ENCODE measurements at regions of chr15 and their contacts with region 1.

Region 1: DNA sequence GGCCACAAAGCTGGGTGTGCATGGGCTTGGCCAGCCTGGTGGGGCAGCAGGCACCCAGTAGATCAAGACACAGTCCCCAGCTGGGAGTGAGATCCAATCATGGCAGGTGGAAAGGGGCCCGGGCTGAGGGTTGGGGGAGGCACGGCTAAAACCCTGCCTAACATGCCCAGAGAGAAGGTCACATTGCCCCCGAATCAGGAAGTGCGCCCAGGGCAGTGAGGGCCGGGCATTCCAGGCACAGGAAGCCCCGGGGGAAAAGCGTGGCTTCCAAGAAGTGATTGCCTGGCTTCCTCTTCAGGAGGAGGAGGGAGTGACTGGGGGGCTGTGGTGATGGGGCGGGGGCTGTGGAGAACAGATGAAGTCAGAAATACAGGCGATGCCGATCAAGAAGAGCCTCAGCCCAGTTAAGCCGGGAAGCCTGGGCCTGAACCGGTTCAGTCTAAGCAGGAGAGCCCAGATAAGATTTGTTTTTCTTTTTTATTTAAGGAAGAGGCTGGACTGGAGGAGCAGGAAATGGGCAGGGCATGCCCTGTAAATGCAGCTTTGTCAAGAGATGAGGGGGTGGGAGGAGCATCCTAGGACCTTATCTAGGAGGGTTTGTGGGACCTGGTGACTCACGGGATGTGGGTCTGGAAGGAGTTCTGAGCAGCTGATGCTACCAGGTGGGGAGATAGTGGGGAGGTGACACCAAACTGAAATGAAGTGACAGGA is 83.9 kb downstream of the CHSY1 start:
- DNase-seq: peak; percentile 90
- H3K4me3 Mint-ChIP-seq: peak overlapping the region; percentile 68
- H3K27ac Mint-ChIP-seq: peak overlapping the region; percentile 94
- H3K4me1 Mint-ChIP-seq: peaks cover 49% of the 10 kb centered on the region
- H3K27me3 Mint-ChIP-seq: no peaks in the 10 kb centered on the region

Region 2: DNA sequence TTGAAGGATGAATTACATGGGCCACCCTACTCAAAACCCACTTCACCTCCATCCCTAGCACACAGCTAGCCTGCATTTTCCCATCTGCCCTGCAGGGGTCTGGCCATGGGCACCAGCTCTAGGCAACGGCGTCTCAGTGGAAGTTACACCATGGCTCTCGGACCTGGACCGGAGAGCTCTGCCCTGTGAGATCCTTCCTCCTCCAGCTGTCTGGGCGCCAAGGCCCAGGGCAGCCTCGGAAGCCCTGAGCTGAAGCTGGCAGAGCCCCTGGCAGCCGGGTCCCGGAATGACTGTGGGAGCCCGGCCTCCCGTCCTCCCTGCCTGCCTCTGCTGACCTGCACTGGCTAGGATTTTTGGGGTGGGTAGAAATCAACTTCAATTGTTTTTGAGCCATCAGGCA is 15.0 kb before region 1 on chr15:
- CTCF ChIA-PET with region 1: interaction called, 11 read pairs
- POLR2A ChIA-PET with region 1: interaction called, 5 read pairs
- DNase-seq: no peak
- H3K4me3 Mint-ChIP-seq: no peak overlapping the region
- H3K27ac Mint-ChIP-seq: no peak overlapping the region
- H3K4me1 Mint-ChIP-seq: peaks cover 34% of the 10 kb centered on the region
- H3K27me3 Mint-ChIP-seq: no peaks in the 10 kb centered on the region

Region 3: DNA sequence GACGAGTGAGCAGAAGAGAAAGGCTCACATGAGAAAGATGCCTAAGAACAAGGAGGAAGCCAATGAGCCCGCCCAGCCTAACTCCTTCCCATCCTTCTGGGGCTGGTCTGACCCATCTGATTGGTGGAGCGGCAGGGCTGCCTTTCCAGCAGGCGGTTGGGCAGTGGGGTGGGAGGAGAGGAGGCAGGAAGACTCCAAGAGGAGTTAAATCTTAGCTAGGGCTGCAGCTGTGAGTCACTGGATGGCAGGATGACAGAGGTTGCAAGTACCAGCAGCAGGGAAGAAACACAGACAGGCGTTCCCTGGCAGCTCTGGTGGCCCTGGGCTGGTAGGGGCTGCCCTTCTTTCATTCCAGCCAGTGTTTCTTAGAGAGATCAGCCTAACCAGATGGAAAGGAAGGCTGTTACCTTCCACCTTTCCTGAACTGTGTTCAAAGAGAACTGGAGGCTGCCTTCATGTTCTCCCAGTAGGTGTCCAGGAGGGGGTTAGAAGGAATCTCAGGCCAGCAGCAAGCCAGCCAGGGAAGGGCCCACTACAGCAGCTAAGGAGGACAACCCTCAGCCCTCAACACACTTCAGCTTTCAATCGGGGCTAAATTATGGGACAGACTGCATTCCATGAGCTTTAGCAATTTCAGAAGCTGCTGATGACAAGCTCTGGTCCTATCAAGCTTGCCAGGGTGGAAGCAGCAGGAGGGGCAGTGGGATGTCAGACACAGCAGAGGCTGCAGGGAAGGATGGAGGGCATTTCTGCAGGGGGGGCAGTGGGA is 33.7 kb after region 1 on chr15:
- CTCF ChIA-PET with region 1: interaction called, 4 read pairs
- POLR2A ChIA-PET with region 1: interaction called, 19 read pairs
- DNase-seq: peak; percentile 36
- H3K4me3 Mint-ChIP-seq: no peak overlapping the region
- H3K27ac Mint-ChIP-seq: peak overlapping the region; percentile 99
- H3K4me1 Mint-ChIP-seq: peaks cover 89% of the 10 kb centered on the region
- H3K27me3 Mint-ChIP-seq: no peaks in the 10 kb centered on the region

Region 4: GRCh38 chr15:101489236-101489632 is 321.3 kb after region 1 on chr15:
- CTCF ChIA-PET with region 1: no interaction called
- POLR2A ChIA-PET with region 1: no interaction called
- DNase-seq: no peak
- H3K4me3 Mint-ChIP-seq: no peak overlapping the region
- H3K27ac Mint-ChIP-seq: no peak overlapping the region
- H3K4me1 Mint-ChIP-seq: no peaks in the 10 kb centered on the region
- H3K27me3 Mint-ChIP-seq: peaks cover 57% of the 10 kb centered on the region